A673 (cell line): ENCODE measurements at regions of chr13 and their contacts with region 1.

Region 1: GRCh38 chr13:45047394-45048310 is 58.3 kb downstream of the GPALPP1 start:
- DNase-seq: peak; percentile 88
- H3K4me3 ChIP-seq: peak overlapping the region; percentile 52
- H3K27ac ChIP-seq: no peak overlapping the region
- H3K4me1 ChIP-seq: peaks cover 4% of the 10 kb centered on the region
- H3K27me3 ChIP-seq: no peaks in the 10 kb centered on the region
- CTCF ChIP-seq: peak; percentile 86

Region 2: GRCh38 chr13:45178349-45179162 is 130.9 kb after region 1 on chr13:
- CTCF ChIA-PET with region 1: no interaction called
- POLR2A ChIA-PET with region 1: no interaction called
- intact Hi-C with region 1: no loop called
- DNase-seq: no peak
- H3K4me3 ChIP-seq: no peak overlapping the region
- H3K27ac ChIP-seq: no peak overlapping the region
- H3K4me1 ChIP-seq: no peaks in the 10 kb centered on the region
- H3K27me3 ChIP-seq: no peaks in the 10 kb centered on the region
- CTCF ChIP-seq: no peak

Region 3: GRCh38 chr13:45280751-45281634 is 233.3 kb after region 1 on chr13:
- CTCF ChIA-PET with region 1: interaction called, 56 read pairs
- POLR2A ChIA-PET with region 1: interaction called, 3 read pairs
- intact Hi-C with region 1: loop called (anchors 1 kb)
- DNase-seq: peak; percentile 79
- H3K4me3 ChIP-seq: no peak overlapping the region
- H3K27ac ChIP-seq: no peak overlapping the region
- H3K4me1 ChIP-seq: peaks cover 4% of the 10 kb centered on the region
- H3K27me3 ChIP-seq: no peaks in the 10 kb centered on the region
- CTCF ChIP-seq: peak; percentile 84

Region 4: GRCh38 chr13:45310341-45311125 is 262.9 kb after region 1 on chr13:
- CTCF ChIA-PET with region 1: interaction called, 17 read pairs
- POLR2A ChIA-PET with region 1: no interaction called
- intact Hi-C with region 1: loop called (anchors 1 kb)
- DNase-seq: no peak
- H3K4me3 ChIP-seq: peak overlapping the region; percentile 39
- H3K27ac ChIP-seq: no peak overlapping the region
- H3K4me1 ChIP-seq: no peaks in the 10 kb centered on the region
- H3K27me3 ChIP-seq: no peaks in the 10 kb centered on the region
- CTCF ChIP-seq: no peak

Region 5: GRCh38 chr13:45340926-45341750 is 293.5 kb after region 1 on chr13 and contains the start of gene TPT1:
- CTCF ChIA-PET with region 1: interaction called, 10 read pairs
- POLR2A ChIA-PET with region 1: no interaction called
- intact Hi-C with region 1: no loop called
- DNase-seq: peak; percentile 99
- H3K4me3 ChIP-seq: peak within 1 kb of the TSS; percentile 99
- H3K27ac ChIP-seq: peak within 1 kb of the TSS; percentile 100
- H3K4me1 ChIP-seq: peaks cover 35% of the 10 kb centered on the region
- H3K27me3 ChIP-seq: no peaks in the 10 kb centered on the region
- CTCF ChIP-seq: no peak
- total RNA-seq, gene TPT1: 1,957 and 1,963 TPM in 2 replicates

Region 6: GRCh38 chr13:45861322-45861721 is 813.7 kb after region 1 on chr13:
- CTCF ChIA-PET with region 1: no interaction called
- POLR2A ChIA-PET with region 1: no interaction called
- intact Hi-C with region 1: no loop called
- DNase-seq: no peak
- H3K4me3 ChIP-seq: no peak overlapping the region
- H3K27ac ChIP-seq: no peak overlapping the region
- H3K4me1 ChIP-seq: no peaks in the 10 kb centered on the region
- H3K27me3 ChIP-seq: no peaks in the 10 kb centered on the region
- CTCF ChIP-seq: no peak